ENCODE measurements at regions of chr2 and their contacts with region 1.

Region 1: DNA sequence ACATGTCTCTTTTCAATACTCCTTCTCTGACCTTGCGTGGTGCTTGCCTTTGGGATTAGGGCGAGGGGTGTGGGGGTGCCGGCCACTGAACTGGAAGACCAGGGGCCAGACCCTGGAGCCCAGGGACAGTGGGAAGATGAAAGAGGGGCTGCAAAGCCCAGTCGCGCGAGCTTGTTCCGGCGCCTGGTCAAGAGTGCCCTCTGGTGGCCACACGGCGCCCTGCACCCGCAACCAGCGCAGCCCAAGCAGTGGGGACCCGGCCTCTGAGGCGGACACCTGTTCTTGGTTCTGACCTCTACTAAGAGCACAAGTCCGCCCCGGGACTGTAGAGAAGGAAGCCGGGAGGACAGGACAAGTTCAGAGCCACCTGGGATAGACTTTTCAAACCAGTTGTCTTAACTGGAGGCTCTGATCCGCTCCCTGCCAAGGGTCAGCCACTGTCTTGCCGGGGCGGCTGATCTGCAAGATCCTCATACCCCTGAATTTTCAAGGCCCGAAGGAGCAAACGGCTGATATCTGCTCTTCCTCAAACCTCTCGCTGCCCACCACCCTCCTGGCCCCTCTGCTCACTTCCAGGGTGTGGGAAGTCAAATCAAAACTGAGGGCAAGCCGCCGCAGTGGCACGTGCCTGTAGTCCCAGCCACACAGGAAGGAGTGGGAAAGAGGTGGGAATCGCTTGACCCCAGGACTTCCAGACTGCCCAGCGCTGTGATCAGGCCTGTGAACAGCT is 14.9 kb upstream of the MSH6 start:
- DNase-seq: peak; percentile 24 to 80 (median 59)
- ATAC-seq: peak; percentile 80 to 91 (median 88)
- H3K4me3 ChIP-seq: no peak overlapping the region
- H3K4me3 Mint-ChIP-seq: peak overlapping the region; percentile 42 to 49 (median 43)
- H3K27ac ChIP-seq: no peak overlapping the region
- H3K27ac Mint-ChIP-seq: no peak overlapping the region
- H3K4me1 ChIP-seq: peaks cover 0 to 8% of the 10 kb centered on the region in 2 experiments
- H3K4me1 Mint-ChIP-seq: peaks cover 3 to 6% (median 5%) of the 10 kb centered on the region in 3 donors
- H3K27me3 ChIP-seq: peaks cover 0 to 13% of the 10 kb centered on the region in 2 experiments
- H3K27me3 Mint-ChIP-seq: peaks cover 0 to 2% of the 10 kb centered on the region in 2 donors

Region 2: GRCh38 chr2:47336259-47337238 is 431.5 kb before region 1 on chr2:
- CTCF ChIA-PET with region 1: interaction called, 14 to 42 read pairs
- POLR2A ChIA-PET with region 1: no interaction called
- DNase-seq: no peak
- ATAC-seq: no peak
- H3K4me3 ChIP-seq: no peak overlapping the region
- H3K4me3 Mint-ChIP-seq: no peak overlapping the region
- H3K27ac ChIP-seq: no peak overlapping the region
- H3K27ac Mint-ChIP-seq: no peak overlapping the region
- H3K4me1 ChIP-seq: no peaks in the 10 kb centered on the region
- H3K4me1 Mint-ChIP-seq: peaks cover 0 to 4% (median 0%) of the 10 kb centered on the region in 3 donors
- H3K27me3 ChIP-seq: peaks cover 0 to 4% of the 10 kb centered on the region in 2 experiments
- H3K27me3 Mint-ChIP-seq: peaks cover 6 to 14% of the 10 kb centered on the region in 2 donors

Region 3: DNA sequence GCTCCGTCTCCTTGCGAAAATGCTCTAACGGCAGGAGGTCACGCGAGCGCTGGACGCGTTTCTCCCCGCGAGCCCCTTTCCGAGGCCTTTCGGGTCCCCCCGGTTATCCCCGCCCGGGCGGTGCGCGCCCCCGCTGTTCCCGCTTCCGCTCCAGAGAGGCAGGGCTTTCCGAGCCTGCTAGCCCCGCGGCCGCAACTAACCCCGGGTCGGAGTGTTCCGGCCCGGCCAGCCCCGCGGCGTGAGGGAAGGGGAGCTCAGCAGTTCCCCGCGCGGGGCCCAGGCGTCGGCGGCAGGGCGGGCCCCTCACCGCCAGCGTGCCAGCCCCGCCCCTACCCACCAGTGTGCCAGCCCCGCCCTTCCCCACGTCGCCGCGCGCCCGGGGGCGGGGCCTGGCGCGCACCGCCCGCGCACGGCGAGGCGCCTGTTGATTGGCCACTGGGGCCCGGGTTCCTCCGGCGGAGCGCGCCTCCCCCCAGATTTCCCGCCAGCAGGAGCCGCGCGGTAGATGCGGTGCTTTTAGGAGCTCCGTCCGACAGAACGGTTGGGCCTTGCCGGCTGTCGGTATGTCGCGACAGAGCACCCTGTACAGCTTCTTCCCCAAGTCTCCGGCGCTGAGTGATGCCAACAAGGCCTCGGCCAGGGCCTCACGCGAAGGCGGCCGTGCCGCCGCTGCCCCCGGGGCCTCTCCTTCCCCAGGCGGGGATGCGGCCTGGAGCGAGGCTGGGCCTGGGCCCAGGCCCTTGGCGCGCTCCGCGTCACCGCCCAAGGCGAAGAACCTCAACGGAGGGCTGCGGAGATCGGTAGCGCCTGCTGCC is 14.8 kb after region 1 on chr2 and contains the start of gene MSH6:
- CTCF ChIA-PET with region 1: interaction called, 10 to 13 read pairs
- POLR2A ChIA-PET with region 1: no interaction called
- DNase-seq: peak; percentile 79 to 95 (median 85)
- ATAC-seq: peak; percentile 89 to 98 (median 93)
- H3K4me3 ChIP-seq: peak within 1 kb of the TSS; percentile 78 to 93
- H3K4me3 Mint-ChIP-seq: peak within 1 kb of the TSS; percentile 84 to 91 (median 86)
- H3K27ac ChIP-seq: peak within 1 kb of the TSS; percentile 76
- H3K27ac Mint-ChIP-seq: peak within 1 kb of the TSS; percentile 74 to 89
- H3K4me1 ChIP-seq: peaks cover 0 to 26% of the 10 kb centered on the region in 2 experiments
- H3K4me1 Mint-ChIP-seq: peaks cover 23 to 34% (median 26%) of the 10 kb centered on the region in 3 donors
- H3K27me3 ChIP-seq: no peaks in the 10 kb centered on the region
- H3K27me3 Mint-ChIP-seq: no peaks in the 10 kb centered on the region
- total RNA-seq, gene MSH6: 32.6 to 46.0 (median 43.8) TPM